ENCODE measurements at regions of chr15 and their contacts with region 1.

Region 1: GRCh38 chr15:43133430-43134156 is at the start of gene TMEM62:
- DNase-seq: peak; percentile 91
- H3K4me3 ChIP-seq: peak within 1 kb of the TSS; percentile 68 to 93 (median 82)
- H3K27ac ChIP-seq: peak within 1 kb of the TSS; percentile 86 to 89 (median 88)
- H3K4me1 ChIP-seq: peaks cover 0 to 23% (median 11%) of the 10 kb centered on the region in 4 donors
- H3K27me3 ChIP-seq: no peaks in the 10 kb centered on the region
- CTCF ChIP-seq: peak in 1 of 4 experiments; percentile 6
- EP300 ChIP-seq: peak in 1 of 4 donors; percentile 10
- POLR2A ChIP-seq: peak; percentile 53 to 57
- total RNA-seq, gene TMEM62: 26.6 to 35.2 (median 33.2) TPM

Region 2: GRCh38 chr15:43086551-43086950 is 47.0 kb before region 1 on chr15:
- intact Hi-C with region 1: loop called (anchors 5 kb)
- DNase-seq: no peak
- H3K4me3 ChIP-seq: no peak overlapping the region
- H3K27ac ChIP-seq: peak overlapping the region in 3 of 4 donors; percentile 34 to 52 (median 44)
- H3K4me1 ChIP-seq: peaks cover 0 to 20% (median 15%) of the 10 kb centered on the region in 4 donors
- H3K27me3 ChIP-seq: no peaks in the 10 kb centered on the region
- CTCF ChIP-seq: no peak
- EP300 ChIP-seq: no peak
- POLR2A ChIP-seq: no peak

Region 3: GRCh38 chr15:43105778-43106485 is 27.7 kb before region 1 on chr15 and contains the start of gene UBR1:
- intact Hi-C with region 1: loop called (anchors 2 kb)
- DNase-seq: peak; percentile 96
- H3K4me3 ChIP-seq: peak within 1 kb of the TSS; percentile 65 to 86 (median 72)
- H3K27ac ChIP-seq: peak within 1 kb of the TSS; percentile 86 to 88 (median 86)
- H3K4me1 ChIP-seq: peaks cover 0 to 32% (median 19%) of the 10 kb centered on the region in 4 donors
- H3K27me3 ChIP-seq: no peaks in the 10 kb centered on the region
- CTCF ChIP-seq: no peak
- EP300 ChIP-seq: peak in 2 of 4 donors; percentile 27 to 46
- POLR2A ChIP-seq: peak; percentile 38 to 45
- total RNA-seq, gene UBR1: 35.3 to 44.7 (median 41.9) TPM

Region 4: DNA sequence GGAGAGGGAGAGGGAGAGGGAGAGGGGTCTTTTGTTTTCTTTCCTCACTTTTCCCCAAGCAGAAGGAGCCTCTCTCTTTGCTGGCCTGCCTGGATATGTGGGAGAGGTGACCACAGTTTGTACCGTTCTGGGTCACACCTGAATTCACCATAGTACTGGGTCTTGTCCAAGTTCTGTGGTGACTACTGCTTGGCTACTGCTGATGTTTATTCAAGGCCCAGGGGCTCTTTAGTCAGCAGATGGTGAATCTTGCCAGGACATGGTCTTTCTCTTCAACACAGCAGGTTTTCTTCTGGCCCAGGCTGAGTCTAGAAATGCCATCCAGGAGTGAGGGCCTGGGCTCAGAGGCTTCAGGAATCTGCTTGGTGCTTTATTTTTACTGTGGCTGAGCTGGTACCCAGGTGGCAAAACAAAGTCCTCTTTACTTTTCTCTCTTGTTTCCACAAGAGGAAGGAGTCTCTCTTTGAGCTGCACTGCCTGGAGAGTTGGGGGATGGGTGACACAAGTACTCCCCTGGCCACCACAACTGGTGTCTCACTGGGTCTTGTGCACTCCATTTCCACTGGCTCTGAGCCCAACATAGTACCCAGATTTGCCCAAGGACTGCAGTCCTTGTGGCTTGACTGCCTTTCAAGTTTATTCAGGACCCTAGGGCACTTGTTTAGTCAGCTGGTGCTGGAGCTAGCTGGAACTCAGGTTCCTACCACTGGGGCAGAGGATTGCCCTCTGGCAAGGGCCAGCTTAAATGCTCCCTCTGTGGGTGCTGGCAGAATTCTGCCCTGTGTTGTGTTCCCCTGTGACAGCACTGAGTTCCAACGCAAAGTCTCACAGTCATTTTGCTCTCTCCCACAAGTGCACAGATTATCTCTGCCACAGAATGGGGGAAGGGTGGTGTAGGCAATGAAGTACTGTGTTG is 34.9 kb after region 1 on chr15:
- intact Hi-C with region 1: loop called (anchors 2 kb)
- DNase-seq: peak; percentile 64
- H3K4me3 ChIP-seq: no peak overlapping the region
- H3K27ac ChIP-seq: peak overlapping the region in 3 of 4 donors; percentile 61 to 81 (median 76)
- H3K4me1 ChIP-seq: peaks cover 0 to 13% (median 11%) of the 10 kb centered on the region in 4 donors
- H3K27me3 ChIP-seq: no peaks in the 10 kb centered on the region
- CTCF ChIP-seq: no peak
- EP300 ChIP-seq: no peak
- POLR2A ChIP-seq: no peak

Region 5: GRCh38 chr15:43185157-43186017 is 51.8 kb after region 1 on chr15 and contains the start of gene CCNDBP1:
- intact Hi-C with region 1: loop called (anchors 5 kb)
- DNase-seq: peak; percentile 94
- H3K4me3 ChIP-seq: peak within 1 kb of the TSS; percentile 47 to 83 (median 68)
- H3K27ac ChIP-seq: peak within 1 kb of the TSS; percentile 82 to 88 (median 87)
- H3K4me1 ChIP-seq: peaks cover 0 to 35% (median 27%) of the 10 kb centered on the region in 4 donors
- H3K27me3 ChIP-seq: no peaks in the 10 kb centered on the region
- CTCF ChIP-seq: peak in 3 of 4 experiments; percentile 6 to 33 (median 19)
- EP300 ChIP-seq: no peak
- POLR2A ChIP-seq: peak; percentile 40 to 55
- total RNA-seq, gene CCNDBP1: 39.1 to 80.5 (median 49.8) TPM

Region 6: DNA sequence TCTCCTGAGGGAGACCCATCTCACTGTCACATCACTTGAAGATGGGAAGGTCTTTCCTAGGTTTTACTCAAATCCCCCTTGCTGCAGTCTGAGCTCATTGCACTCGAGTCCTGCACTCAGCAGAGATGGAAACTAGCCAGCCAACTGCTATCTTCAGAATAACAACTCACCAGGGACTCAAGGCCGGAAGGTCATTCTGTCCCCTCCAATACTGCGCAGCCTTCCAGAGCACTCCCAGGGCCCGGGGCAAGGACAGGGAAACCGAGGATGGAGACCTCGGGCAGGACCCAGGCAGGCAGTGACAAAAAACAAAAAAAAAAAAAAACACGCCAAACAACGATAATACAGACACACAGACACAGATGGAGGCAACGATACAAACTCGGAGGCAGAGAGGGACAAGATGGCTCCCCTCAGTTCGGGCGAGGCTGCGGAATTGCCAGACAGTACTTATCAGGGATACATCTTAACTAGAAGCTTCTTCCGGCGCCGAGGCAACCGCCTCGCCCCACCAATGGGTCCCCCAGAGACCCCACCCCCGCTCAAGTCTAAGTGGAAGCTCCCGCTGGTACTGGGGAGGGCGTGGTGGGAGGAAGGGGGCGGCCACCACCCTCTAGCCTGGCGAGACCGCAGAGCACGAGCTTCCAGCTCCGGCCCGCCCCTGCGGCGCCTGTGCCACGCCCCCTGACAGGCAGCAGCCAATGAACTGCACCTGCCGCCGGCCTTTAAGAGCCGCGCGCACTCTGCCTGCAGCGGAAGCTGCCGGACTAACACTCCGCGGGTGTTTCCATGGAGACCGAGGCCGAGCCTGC is 376.8 kb after region 1 on chr15:
- intact Hi-C with region 1: no loop called
- DNase-seq: peak; percentile 100
- H3K4me3 ChIP-seq: peak overlapping the region; percentile 52 to 63 (median 56)
- H3K27ac ChIP-seq: peak overlapping the region; percentile 84 to 93 (median 92)
- H3K4me1 ChIP-seq: peaks cover 0 to 46% (median 39%) of the 10 kb centered on the region in 4 donors
- H3K27me3 ChIP-seq: no peaks in the 10 kb centered on the region
- CTCF ChIP-seq: peak in 2 of 4 experiments; percentile 30 to 31
- EP300 ChIP-seq: no peak
- POLR2A ChIP-seq: peak; percentile 76 to 82